Dorsolateral prefrontal cortex (tissue), 120 donors: ENCODE measurements at regions of chr3 and their contacts with region 1.

Region 1: DNA sequence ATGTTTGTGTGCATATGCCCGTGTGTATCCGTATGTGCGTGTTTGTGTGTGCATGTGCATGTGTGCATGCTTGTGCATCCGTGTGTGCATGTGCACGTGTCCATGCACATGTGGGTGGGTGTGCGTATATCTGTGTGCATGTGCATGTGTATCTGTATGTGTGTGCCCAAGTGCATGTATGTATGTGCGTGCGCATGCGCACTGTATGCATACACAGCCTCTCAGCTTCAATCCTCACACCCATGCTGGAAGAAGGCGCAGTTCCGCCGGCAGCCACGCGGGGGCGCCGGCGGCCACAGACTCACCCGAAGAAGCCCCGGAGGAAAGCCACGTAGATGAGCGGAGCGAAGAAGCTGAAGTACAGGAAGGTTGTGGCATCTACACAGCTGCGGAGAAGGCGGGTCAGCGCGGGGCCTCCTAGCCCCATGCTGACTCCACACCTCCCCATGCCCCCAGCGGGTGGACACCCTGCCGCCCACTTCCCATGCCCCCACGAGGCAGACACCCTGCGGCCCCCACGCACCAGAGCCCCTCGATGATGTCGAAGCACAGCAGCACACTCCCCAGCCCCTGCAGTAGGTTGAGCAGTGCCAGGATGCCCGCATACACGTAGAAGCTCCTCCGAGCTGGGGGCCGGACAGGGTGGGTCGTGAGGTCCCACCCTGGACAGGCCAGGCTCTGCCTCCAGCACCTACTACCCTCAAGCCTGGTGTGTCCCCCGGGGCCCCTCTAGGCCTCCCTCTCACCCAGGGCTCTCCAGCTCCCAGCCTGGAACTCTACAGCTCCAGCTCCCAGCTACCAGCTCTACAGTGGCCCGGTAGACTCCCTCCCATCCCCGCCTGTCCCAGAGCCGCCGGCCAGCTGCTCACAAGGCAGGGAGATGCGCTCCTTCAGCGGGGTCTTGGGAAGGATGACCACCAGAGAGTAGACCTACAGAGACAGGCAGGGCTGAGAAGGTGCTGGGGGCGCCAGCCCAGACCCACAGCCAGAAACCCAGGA is 15.4 kb downstream of the TPRA1 start:
- DNase-seq: peak; percentile 70 to 90 (median 88)
- H3K4me3 ChIP-seq: peak overlapping the region in 14 of 59 donors; percentile 1 to 42 (median 18)
- H3K27ac ChIP-seq: peak overlapping the region in 23 of 59 donors; percentile 3 to 58 (median 41)
- H3K27me3 ChIP-seq: no peaks in the 10 kb centered on the region
- CTCF ChIP-seq: peak; percentile 85 to 99 (median 96)

Region 2: DNA sequence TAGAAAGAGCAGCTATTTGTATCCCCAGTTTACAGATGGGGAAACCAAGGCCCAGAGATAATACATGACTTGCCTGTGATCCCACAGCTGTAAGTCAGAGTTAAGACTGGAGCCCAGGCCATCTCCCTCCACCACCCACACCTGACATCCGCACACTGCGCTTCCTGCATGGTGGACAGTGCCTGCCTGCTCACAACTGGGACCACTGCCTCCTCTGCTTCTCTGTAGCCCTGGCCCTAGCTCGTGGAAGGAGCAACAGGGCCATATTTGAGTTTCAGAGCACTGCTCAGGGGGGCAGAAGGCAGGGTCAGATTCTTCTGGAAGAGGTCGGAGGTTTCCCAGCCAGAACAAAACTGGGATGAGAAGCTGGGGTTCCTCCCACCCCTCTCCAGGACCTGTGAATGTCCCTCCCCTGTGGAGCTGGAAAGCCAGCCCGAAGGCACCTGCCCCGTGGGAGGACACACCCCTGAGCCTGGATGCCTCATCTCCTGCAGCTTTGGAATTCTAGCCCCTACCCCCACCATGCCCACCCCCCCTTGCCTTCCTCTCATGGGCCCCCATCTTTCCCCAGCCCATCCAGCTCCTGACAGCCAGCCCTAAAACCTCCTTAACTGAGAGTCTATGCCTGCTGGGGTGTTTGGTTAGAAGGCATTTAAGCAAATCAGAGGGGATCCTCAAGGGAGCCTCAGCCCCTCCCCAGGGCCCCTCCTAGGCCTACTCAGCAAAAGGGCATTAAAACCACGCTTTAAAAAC is 84.7 kb before region 1 on chr3:
- intact Hi-C with region 1: no loop called
- DNase-seq: no peak
- H3K4me3 ChIP-seq: no peak overlapping the region
- H3K27ac ChIP-seq: no peak overlapping the region
- H3K27me3 ChIP-seq: no peaks in the 10 kb centered on the region
- CTCF ChIP-seq: no peak

Region 3: GRCh38 chr3:127590593-127591477 is 15.7 kb after region 1 on chr3 and contains the start of gene TPRA1:
- intact Hi-C with region 1: loop called in 1 of 2 experiments (anchors 1 kb)
- DNase-seq: peak; percentile 64 to 95 (median 90)
- H3K4me3 ChIP-seq: peak within 1 kb of the TSS; percentile 54 to 99 (median 92)
- H3K27ac ChIP-seq: peak within 1 kb of the TSS; percentile 58 to 96 (median 88)
- H3K27me3 ChIP-seq: no peaks in the 10 kb centered on the region
- CTCF ChIP-seq: peak in 42 of 56 donors; percentile 4 to 65 (median 36)
- total RNA-seq, gene TPRA1: 19.2 to 39.2 (median 24.6) TPM

Region 4: DNA sequence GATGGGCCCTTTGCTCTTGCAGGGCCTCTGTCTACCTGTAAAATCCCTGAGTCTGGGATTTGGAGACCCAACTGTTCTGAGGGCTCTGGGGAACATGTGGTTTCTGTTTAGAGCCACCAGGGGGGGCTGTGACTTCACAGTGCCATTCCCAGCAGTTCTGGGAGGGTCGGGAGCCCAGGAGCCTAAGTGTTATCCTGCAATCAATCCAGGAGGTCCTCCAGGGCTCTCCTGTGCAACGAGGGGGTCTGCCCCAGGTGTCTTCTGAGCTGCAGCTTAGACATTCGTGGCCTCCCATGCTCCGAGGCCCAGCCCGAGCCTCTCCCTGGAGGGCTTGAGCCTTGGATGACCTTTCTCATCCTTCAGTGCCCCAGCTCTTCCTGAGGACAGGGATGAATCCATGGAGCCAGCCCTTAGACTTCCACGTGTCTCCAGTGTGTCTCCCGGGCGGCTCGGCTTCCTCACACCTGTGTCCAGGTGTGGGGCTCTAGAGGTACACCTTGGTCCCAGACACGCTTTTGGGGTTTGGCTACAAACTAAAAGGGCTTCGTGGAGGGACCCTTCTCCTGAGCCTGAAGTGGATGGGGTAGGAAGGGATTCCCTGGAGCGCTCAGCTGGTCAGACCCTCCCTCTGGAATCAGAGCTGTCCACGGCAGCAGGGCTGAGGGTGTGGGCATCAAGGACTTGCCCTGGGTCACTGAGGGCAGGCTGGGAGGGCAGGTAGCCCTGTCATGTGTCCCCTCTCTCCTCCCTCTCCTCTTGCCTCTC is 77.2 kb after region 1 on chr3:
- intact Hi-C with region 1: no loop called
- DNase-seq: peak in 6 of 10 donors; percentile 51 to 75 (median 64)
- H3K4me3 ChIP-seq: no peak overlapping the region
- H3K27ac ChIP-seq: peak overlapping the region in 6 of 59 donors; percentile 3 to 54 (median 18)
- H3K27me3 ChIP-seq: no peaks in the 10 kb centered on the region
- CTCF ChIP-seq: peak; percentile 64 to 96 (median 89)

Region 5: GRCh38 chr3:127831723-127832172 is 256.6 kb after region 1 on chr3:
- intact Hi-C with region 1: loop called in 1 of 2 experiments (anchors 10 kb)
- DNase-seq: no peak
- H3K4me3 ChIP-seq: no peak overlapping the region
- H3K27ac ChIP-seq: no peak overlapping the region
- H3K27me3 ChIP-seq: no peaks in the 10 kb centered on the region
- CTCF ChIP-seq: peak in 53 of 56 donors; percentile 19 to 68 (median 42)

Region 6: DNA sequence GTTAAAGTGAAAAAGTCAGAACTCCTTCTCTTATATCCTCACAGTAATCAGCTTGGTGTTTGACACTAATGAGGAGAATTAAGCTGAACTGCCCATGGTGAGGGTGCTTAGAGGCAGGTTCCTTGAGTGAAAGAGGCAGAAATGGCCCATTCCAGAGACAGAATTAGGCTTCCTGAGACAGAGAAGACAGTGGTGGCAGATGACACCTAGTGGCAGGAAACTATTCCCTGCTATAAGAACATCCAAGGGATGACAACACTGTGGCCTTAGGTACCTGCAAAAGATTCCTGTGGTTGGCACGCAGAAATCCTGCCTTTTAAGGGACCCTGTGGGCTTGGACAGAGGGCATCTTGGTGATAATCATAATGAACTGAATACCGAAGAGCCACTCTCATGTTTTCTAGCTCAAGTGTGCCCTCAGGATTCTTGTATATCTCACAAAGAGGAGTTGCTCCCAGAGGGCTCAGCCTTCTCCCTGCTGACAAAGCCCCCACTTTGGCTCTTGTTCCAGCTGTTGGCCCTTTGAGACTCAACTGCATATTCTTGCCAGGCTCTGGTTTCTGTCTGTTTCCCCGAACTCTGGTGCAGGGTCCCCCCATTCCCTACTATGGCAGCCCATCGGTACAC is 395.9 kb after region 1 on chr3:
- intact Hi-C with region 1: loop called (anchors 5 kb)
- DNase-seq: peak in 4 of 10 donors; percentile 18 to 65 (median 55)
- H3K4me3 ChIP-seq: no peak overlapping the region
- H3K27ac ChIP-seq: no peak overlapping the region
- H3K27me3 ChIP-seq: no peaks in the 10 kb centered on the region
- CTCF ChIP-seq: peak; percentile 58 to 85 (median 74)